ENCODE measurements at regions of chr19 and their contacts with region 1.

Region 1: GRCh38 chr19:47035127-47036096 is 13.0 kb downstream of the TMEM160 start:
- DNase-seq: peak; percentile 97
- CTCF ChIP-seq: peak; percentile 93

Region 2: DNA sequence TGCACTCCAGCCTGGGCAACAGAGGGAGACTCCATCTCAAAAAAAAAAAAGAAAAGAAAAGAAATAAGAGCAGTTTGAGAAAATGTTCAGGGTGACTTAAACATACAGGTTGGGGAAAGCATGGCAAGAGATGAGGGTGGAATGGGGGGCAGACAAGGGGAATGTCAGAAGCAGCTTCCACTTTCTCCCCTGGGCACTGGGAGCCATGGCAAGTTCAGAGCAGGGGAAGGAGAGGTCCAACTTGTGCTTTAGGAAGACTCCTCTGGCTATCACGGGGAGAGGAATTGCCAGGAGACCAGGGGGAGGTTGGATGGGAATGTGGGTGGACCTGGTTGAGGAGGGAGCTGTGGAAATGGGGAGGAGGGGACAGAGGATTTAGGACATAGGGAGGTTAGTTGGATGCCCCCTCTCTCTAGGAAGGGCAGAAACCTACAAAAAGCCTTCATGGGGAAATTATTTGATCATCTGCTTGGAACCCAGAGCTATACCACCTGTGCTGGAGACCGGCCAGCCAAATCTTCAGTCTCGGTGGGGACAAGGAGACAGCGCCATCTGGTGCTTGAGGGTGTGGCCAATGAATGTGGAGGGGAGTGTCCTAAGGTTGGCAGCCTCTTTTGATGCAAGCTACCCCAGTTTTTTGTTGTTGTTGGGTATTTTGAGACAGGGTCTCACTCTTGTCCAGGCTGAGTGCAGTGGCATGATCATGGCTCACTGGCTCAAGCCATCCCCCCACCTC is 281.8 kb before region 1 on chr19:
- CTCF ChIA-PET with region 1: no interaction called
- POLR2A ChIA-PET with region 1: no interaction called
- DNase-seq: peak; percentile 78
- CTCF ChIP-seq: peak; percentile 77

Region 3: DNA sequence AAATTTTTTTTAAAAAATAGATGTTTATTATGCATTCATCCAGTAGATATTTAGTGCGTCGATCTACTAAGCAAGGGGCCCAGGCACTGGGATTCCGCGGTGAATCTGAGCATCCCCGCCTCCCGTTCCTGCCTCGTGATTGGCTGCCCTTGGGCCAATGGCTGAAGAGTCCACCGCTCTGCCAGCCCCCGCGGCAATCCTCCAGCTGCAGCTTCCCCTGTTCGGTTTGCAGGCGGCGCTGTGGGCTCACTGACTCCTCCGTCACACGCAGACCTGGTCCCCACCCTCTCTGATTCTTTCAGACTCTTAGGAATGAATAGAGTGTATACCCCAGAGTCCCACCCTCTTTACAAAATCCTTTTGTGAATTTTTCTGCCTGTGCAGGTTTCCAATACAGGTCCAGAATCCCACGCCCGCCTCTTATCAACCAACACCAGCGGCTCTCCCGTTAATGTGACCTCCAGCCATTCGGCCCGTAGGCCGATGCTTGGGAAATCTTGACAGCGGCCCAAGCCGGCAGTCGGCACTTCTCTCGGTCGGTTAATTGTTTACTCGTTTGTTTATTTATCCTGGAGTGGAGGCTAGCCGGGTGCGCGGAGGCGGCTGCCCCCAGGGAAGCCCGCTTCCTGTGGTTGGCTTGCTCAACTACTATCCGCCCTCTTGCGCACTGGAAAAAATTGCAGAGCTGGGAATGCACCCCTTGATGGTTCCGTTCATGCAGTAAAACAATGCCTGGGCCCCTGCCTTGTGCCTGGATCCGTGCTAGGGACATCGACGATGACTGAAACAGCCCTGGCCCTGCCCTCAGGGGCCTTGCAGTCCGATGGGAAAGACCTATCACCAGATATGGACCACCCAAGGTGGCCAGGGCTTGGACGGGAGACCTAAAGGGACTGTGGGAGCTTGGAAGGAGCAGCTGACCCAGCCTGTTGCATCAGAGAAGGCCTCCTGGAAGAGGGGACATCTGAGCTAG is 179.1 kb before region 1 on chr19:
- CTCF ChIA-PET with region 1: interaction called, 10 read pairs
- POLR2A ChIA-PET with region 1: no interaction called
- DNase-seq: peak; percentile 90
- CTCF ChIP-seq: peak; percentile 87

Region 4: DNA sequence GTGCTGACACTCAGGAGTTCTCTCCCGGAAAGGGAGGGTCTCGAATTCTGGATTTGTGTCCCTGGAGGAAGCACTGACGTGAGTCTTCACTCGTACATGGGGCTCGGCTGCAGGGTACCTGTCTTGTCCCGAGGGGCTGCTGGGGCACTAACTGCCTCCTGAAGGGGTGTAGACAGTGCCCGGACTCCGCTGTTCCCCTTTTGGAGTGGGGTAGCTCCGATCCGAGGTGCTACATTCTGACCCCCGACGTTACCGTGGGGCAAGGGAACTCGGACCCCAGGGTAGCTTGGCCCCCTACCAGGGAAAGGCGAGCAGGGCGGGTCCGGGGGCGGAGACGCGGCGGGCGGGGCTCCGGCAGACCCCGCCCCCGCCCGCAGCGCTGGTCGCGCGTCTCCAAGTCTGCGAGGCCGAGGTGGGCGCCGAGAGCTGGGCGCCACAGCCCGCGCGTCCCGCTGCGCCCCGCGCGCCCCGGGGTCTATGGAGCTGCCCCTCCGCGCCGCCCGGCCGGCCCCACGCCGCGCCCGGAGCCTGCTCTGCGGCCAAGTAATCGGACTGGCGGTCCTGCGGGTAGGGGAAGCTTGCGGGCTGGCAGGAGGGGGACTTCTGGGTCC is 15.9 kb before region 1 on chr19 and contains the start of gene NPAS1:
- CTCF ChIA-PET with region 1: interaction called, 53 read pairs
- POLR2A ChIA-PET with region 1: interaction called, 8 read pairs
- DNase-seq: no peak
- CTCF ChIP-seq: no peak

Measured in GM10248 (cell line).